Activated CD4-positive, alpha-beta memory T cell treated with anti-CD3 and anti-CD28 coated beads for 36 hours (primary cell): ENCODE measurements at regions of chr1 and their contacts with region 1.

Region 1: DNA sequence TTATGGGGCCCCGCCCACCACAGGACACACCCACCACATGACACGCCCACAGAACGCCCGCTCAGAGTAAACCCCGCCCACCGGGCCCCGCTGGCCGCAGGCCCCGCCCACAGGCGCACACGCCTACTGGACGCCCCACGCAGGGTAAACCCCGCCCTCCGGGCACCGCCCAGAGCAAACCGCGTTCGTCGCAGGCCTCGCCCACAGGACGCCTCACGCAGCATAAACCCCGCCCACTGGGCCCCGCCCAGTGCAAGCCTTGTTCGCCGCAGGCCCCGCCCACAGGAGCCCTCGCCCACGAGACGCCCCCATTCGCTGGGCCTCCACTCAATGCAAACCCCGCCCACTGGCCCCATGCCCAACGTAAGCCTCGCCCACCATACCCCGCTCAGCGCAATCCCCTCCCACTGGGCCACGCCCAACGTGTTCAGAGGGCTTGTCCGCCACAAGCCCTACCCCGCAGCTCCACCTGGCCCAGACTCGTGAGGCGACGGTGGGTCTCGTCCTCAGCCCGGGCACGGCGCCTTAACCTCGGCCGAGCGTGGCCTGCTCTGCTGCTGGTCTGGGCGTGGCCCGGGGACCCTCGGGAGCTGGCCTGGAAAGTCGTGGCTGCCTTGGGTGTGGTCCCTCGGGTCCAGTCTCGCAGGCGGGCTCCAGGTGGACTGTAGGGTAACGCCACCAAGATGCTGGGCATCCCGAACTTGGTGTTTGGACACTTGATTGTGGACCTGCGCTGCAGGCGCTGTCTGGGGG is 401 bp upstream of the TMEM52 start:
- DNase-seq: peak; percentile 99
- H3K4me3 Mint-ChIP-seq: peak overlapping the region; percentile 62
- H3K27ac Mint-ChIP-seq: no peak overlapping the region
- H3K4me1 Mint-ChIP-seq: peaks cover 2% of the 10 kb centered on the region
- H3K27me3 Mint-ChIP-seq: peaks cover 1% of the 10 kb centered on the region

Region 2: GRCh38 chr1:1796466-1796865 is 123.0 kb before region 1 on chr1:
- CTCF ChIA-PET with region 1: no interaction called
- POLR2A ChIA-PET with region 1: no interaction called
- intact Hi-C with region 1: no loop called
- DNase-seq: no peak
- H3K4me3 Mint-ChIP-seq: no peak overlapping the region
- H3K27ac Mint-ChIP-seq: no peak overlapping the region
- H3K4me1 Mint-ChIP-seq: peaks cover 2% of the 10 kb centered on the region
- H3K27me3 Mint-ChIP-seq: no peaks in the 10 kb centered on the region

Region 3: GRCh38 chr1:1841575-1841995 is 77.9 kb before region 1 on chr1:
- CTCF ChIA-PET with region 1: no interaction called
- POLR2A ChIA-PET with region 1: no interaction called
- intact Hi-C with region 1: no loop called
- DNase-seq: no peak
- H3K4me3 Mint-ChIP-seq: no peak overlapping the region
- H3K27ac Mint-ChIP-seq: peak overlapping the region; percentile 70
- H3K4me1 Mint-ChIP-seq: peaks cover 39% of the 10 kb centered on the region
- H3K27me3 Mint-ChIP-seq: no peaks in the 10 kb centered on the region

Region 4: GRCh38 chr1:1906185-1907097 is 13.0 kb before region 1 on chr1:
- CTCF ChIA-PET with region 1: interaction called, 3 read pairs
- POLR2A ChIA-PET with region 1: no interaction called
- intact Hi-C with region 1: loop called (anchors 1 kb)
- DNase-seq: peak; percentile 82
- H3K4me3 Mint-ChIP-seq: peak overlapping the region; percentile 24
- H3K27ac Mint-ChIP-seq: peak overlapping the region; percentile 42
- H3K4me1 Mint-ChIP-seq: peaks cover 10% of the 10 kb centered on the region
- H3K27me3 Mint-ChIP-seq: no peaks in the 10 kb centered on the region

Region 5: DNA sequence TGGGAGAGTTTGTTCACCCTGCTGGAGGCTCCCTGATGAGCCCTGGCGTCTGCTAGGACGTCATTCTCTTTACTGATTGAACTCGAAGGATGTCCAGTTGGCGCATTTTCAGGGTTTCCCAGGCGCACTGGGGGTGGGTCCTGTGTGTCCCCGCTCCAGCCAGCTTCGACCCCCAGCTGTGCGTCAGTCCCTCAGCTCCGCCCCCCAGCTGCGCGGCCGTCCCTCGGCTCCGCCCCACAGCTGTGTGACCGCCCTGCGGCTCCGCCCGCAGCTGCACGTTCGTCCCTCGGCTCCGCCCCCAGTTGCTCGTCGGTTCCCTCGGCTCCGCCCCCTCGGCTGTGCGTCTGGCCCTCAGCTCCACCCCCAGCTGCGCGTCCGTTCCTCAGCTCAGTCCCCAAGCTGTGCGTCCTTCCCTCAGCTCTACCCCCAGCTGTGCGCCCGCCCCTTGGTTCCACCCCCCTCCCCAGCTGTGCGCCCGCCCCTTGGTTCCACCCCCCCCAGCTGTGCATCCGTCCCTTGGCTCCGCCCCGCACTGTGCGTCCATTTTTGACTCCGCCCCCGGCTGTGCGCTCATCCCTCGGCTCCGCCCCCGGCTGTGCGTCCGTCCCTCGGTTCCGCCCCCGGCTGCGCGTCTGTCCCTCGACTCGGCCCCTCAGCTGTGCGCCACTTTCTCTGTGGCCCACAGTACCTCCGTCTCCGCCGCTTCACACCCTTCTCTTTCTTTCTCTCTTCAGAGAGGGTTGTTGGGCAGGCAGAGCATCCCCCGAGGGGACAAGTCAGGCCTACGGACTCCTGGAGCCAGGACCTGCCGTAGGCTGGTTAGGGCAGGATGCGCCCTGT is 213.8 kb after region 1 on chr1:
- CTCF ChIA-PET with region 1: no interaction called
- POLR2A ChIA-PET with region 1: no interaction called
- intact Hi-C with region 1: loop called (anchors 1 kb)
- DNase-seq: peak; percentile 98
- H3K4me3 Mint-ChIP-seq: peak overlapping the region; percentile 77
- H3K27ac Mint-ChIP-seq: peak overlapping the region; percentile 49
- H3K4me1 Mint-ChIP-seq: peaks cover 19% of the 10 kb centered on the region
- H3K27me3 Mint-ChIP-seq: no peaks in the 10 kb centered on the region

Region 6: DNA sequence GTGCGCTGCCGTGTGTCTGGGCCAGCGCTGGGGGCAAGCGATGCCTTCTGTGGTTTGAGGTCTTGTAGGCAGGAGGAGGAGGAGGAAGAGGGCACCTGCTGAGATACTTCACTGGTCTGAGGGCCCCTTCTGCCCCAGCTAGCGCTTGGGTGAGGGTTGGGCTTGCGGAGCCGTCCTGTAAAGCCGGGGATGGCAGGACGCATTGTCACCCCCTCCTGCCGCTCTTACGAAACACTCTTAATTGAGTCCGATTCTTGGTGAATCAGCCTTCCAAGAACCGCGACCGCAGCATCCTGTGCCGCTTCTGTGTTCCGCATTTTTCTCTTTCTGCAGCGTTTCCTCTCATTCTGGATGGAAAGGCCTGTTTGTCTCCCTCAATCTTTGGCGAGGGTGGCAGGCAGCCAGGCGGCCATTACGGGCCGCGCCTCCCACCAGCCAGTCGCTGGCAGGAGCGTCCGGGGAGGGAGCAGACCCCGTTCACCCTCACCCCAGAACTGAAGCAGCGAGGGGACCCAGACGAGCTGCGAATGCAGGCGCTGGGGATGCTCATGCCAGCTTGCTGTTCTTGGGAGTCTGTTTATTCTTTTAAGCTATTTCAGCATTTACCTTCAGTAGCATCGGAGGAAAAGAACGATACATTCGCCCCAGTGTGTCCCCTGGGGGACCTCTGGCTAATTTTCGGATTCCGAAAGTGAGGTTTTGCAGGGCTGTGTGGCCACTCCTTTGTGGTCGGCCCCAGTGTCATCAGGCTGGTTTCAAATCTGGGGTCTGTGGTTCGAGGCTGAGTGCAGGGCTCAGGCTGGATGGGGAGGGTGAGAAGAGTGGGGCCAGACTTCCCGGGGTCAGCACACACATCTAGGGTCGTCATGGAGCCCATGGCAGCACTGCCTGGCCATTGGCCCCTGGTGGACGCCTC is 371.4 kb after region 1 on chr1:
- CTCF ChIA-PET with region 1: no interaction called
- POLR2A ChIA-PET with region 1: no interaction called
- intact Hi-C with region 1: loop called (anchors 10 kb)
- DNase-seq: peak; percentile 94
- H3K4me3 Mint-ChIP-seq: peak overlapping the region; percentile 70
- H3K27ac Mint-ChIP-seq: peak overlapping the region; percentile 96
- H3K4me1 Mint-ChIP-seq: peaks cover 81% of the 10 kb centered on the region
- H3K27me3 Mint-ChIP-seq: no peaks in the 10 kb centered on the region

Region 7: DNA sequence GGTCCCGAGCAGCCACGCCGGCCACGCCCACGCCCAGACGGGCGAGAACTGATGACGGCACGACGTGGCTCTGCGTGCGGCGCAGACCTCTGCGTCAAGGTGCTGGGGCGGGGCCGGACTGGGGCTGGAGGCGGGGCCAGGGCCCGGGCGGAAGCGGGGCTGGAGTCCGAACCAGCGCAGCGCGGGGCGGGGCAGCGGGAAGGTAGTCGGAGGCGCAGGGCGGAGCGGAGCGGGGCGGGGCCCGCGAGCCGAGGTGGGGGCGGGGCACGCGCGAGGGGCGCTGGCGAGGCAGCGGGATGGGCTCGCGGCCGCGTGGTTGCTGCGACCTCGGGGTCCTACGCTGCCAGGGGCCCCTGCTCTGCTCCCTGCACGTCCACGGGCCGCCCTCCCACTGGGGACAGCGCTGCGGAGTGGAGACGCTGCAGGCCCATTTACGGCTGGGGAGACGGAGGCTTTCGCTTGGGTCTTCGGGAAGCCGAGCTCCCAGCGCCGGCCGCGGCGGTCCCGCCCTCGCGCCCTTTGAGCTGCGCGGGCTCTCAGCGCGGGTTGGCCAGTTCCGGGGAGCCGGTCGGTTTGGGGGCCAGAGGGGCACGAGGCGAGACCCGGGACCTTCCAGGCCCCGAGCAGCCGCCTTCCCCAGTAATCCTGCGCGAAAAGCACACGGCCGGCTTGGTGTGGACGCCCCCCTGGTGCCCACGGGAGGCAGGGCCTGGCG is 493.2 kb after region 1 on chr1 and contains the start of gene PEX10:
- CTCF ChIA-PET with region 1: no interaction called
- POLR2A ChIA-PET with region 1: no interaction called
- intact Hi-C with region 1: loop called (anchors 10 kb)
- DNase-seq: peak; percentile 99
- H3K4me3 Mint-ChIP-seq: peak within 1 kb of the TSS; percentile 88
- H3K27ac Mint-ChIP-seq: peak within 1 kb of the TSS; percentile 82
- H3K4me1 Mint-ChIP-seq: peaks cover 34% of the 10 kb centered on the region
- H3K27me3 Mint-ChIP-seq: no peaks in the 10 kb centered on the region
- total RNA-seq, gene PEX10: 14.8 to 15.4 TPM

Region 8: GRCh38 chr1:2525920-2526823 is 606.7 kb after region 1 on chr1 and contains the start of gene PANK4:
- CTCF ChIA-PET with region 1: no interaction called
- POLR2A ChIA-PET with region 1: no interaction called
- intact Hi-C with region 1: loop called (anchors 2 kb)
- DNase-seq: peak; percentile 92
- H3K4me3 Mint-ChIP-seq: peak within 1 kb of the TSS; percentile 85
- H3K27ac Mint-ChIP-seq: peak within 1 kb of the TSS; percentile 92
- H3K4me1 Mint-ChIP-seq: peaks cover 45% of the 10 kb centered on the region
- H3K27me3 Mint-ChIP-seq: peaks cover 5% of the 10 kb centered on the region
- total RNA-seq, gene PANK4: 42.6 to 45.1 TPM